ENCODE measurements at regions of chr1 and their contacts with region 1.

Region 1: GRCh38 chr1:77978969-77979876 is at the start of gene FUBP1:
- DNase-seq: peak; percentile 90
- CTCF ChIP-seq: peak; percentile 74

Region 2: DNA sequence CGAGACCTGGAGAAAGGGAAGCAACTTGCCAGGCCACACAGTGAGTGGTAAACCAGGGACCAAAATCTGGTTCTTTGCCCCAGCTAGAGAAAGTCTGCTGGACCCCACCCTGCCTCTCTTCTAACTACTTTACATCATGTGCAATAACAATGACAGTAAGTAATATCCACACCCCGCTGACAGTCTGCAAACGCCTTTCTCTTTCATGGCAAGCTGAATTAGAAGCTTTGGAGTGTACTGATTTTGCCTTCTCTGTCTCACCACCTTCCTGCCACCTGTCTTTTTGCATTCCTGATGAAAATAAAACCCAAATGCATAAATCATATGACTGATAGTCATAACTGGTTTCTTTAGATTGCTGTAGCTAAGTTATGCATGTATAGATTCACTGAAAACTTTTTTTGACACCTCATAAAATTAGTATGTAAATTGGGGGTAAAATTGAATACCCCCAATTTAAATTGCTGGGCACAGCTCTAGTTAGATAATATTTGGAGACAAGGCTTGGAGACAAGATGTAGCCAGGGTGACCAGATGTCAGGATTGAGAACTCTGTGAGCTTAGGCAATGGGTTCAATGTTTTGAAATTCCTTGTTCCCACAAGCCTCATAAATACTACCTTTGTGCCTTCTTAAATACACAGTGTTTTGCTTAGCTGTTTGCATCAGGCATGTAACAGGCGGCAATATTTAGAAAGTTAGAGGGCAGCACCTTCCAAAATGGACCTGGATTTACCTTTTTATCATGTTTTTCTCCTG is 1038.5 kb before region 1 on chr1:
- CTCF ChIA-PET with region 1: no interaction called
- POLR2A ChIA-PET with region 1: interaction called, 12 read pairs
- DNase-seq: no peak
- CTCF ChIP-seq: no peak

Region 3: DNA sequence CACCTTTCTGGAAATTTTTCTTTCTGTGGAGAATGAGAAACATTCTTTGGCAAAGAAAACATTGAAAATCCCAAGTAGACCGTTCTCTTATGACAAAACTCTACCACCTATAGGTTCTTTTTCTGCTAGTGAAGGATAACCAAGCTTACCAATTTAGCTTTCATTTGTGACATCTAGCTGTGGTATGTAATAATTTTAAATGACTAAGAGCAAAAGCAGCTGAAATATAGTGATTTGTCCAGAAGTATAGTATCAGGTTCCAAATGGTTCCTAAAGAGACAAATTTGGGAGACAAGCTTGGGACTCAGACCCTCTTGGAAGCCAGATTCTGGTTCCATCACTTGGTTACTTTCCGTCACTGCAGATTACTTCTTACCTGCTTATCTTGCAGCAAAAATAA is 24.7 kb before region 1 on chr1:
- CTCF ChIA-PET with region 1: interaction called, 4 read pairs
- POLR2A ChIA-PET with region 1: interaction called, 11 read pairs
- DNase-seq: no peak
- CTCF ChIP-seq: no peak

Measured in GM10248 (cell line).